K562 (cell line): ENCODE measurements at regions of chr1 and their contacts with region 1.

Region 1: GRCh38 chr1:65393347-65393746 is 27.1 kb upstream of the LEPR start:
- DNase-seq: peak in 2 of 4 experiments; percentile 13 to 29
- ATAC-seq: peak; percentile 29; the same call in 1 of the 3 replicates
- H3K4me3 ChIP-seq: no peak overlapping the region
- H3K27ac ChIP-seq: peak overlapping the region; percentile 25; the same call in 2 of the 3 replicates
- H3K4me1 ChIP-seq: no peaks in the 10 kb centered on the region
- H3K27me3 ChIP-seq: no peaks in the 10 kb centered on the region
- CTCF ChIP-seq: no peak
- EP300 ChIP-seq: no peak
- POLR2A ChIP-seq: no peak
- RAD21 ChIP-seq: no peak

Region 2: GRCh38 chr1:65153635-65154034 is 239.7 kb before region 1 on chr1:
- CTCF ChIA-PET with region 1: no interaction called
- POLR2A ChIA-PET with region 1: no interaction called
- in situ Hi-C with region 1: no loop called
- intact Hi-C with region 1: no loop called
- DNase-seq: no peak
- ATAC-seq: no peak
- H3K4me3 ChIP-seq: no peak overlapping the region
- H3K27ac ChIP-seq: no peak overlapping the region
- H3K4me1 ChIP-seq: peaks cover 7 to 17% of the 10 kb centered on the region in 2 experiments
- H3K27me3 ChIP-seq: no peaks in the 10 kb centered on the region
- CTCF ChIP-seq: no peak
- EP300 ChIP-seq: no peak
- POLR2A ChIP-seq: no peak
- RAD21 ChIP-seq: no peak

Region 3: DNA sequence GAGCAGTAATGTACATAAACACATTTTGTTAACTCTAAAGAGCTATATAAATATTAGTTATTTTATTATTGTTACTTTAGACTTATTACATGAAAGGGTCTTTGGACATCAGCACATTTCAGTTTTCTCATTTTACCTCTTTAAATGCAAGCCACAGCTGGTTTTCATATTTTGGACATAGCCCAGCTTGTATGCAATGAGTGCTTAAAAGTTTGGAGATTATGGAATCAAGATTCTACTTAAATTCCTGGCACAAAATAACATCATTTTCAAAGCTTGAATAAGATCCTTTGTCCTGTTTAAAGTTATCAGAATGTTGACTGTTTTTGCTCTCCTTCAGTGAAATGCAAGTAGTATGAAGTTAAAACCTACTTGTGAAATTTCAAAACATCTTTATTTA is 11.6 kb after region 1 on chr1:
- CTCF ChIA-PET with region 1: no interaction called
- POLR2A ChIA-PET with region 1: interaction called, 11 read pairs
- in situ Hi-C with region 1: no loop called
- intact Hi-C with region 1: no loop called
- DNase-seq: no peak
- ATAC-seq: no peak
- H3K4me3 ChIP-seq: no peak overlapping the region
- H3K27ac ChIP-seq: no peak overlapping the region
- H3K4me1 ChIP-seq: no peaks in the 10 kb centered on the region; a peak in 1 of 5 replicates
- H3K27me3 ChIP-seq: no peaks in the 10 kb centered on the region
- CTCF ChIP-seq: no peak
- EP300 ChIP-seq: no peak
- POLR2A ChIP-seq: no peak
- RAD21 ChIP-seq: no peak

Region 4: DNA sequence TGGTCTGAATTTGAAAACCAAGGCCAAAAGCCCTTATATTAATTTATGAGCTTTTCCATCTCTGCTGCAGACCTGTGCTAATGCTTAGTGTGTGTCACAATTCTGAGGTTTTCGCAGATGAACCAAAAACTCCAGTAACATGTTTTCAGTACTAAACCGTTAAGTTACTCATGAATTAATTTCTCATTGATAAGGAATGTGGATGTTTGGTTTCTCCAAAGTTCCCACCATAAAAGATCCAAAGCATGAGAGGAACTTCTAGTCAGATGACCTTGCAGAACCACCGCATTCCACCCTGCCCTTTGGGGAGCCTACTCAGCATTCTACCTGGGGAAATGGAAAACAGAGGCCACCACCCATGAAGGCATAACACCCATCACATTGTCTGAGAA is 19.6 kb after region 1 on chr1:
- CTCF ChIA-PET with region 1: no interaction called
- POLR2A ChIA-PET with region 1: interaction called, 10 read pairs
- in situ Hi-C with region 1: no loop called
- intact Hi-C with region 1: no loop called
- DNase-seq: no peak
- ATAC-seq: no peak
- H3K4me3 ChIP-seq: no peak overlapping the region
- H3K27ac ChIP-seq: peak overlapping the region; percentile 85
- H3K4me1 ChIP-seq: peaks cover 13 to 56% of the 10 kb centered on the region in 2 experiments
- H3K27me3 ChIP-seq: no peaks in the 10 kb centered on the region
- CTCF ChIP-seq: no peak
- EP300 ChIP-seq: no peak
- POLR2A ChIP-seq: no peak
- RAD21 ChIP-seq: no peak